ENCODE measurements at regions of chr3 and their contacts with region 1.

Region 1: GRCh38 chr3:45760878-45761711 is 35.2 kb downstream of the SLC6A20 start:
- DNase-seq: peak; percentile 53
- ATAC-seq: peak; percentile 90

Region 2: DNA sequence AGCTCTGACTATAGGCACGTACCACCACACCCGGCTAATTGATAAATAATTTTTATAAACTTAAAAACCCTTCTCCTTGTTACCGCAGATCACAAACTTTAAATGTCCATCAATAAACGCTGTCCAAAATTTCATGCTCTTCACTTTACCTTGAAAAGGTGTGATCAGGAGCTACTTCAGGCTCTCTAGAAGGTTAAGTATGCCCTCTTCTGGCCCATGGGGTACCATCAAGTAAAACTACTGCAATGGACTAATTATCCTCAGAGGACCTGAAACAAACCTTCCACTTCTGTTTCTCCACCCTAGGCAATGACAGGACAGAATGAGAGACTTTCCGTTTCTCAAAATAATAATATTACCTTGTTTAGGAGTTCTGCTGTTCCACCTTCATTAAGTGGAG is 71.6 kb after region 1 on chr3:
- intact Hi-C with region 1: loop called (anchors 5 kb)
- DNase-seq: no peak
- ATAC-seq: peak; percentile 36

Region 3: DNA sequence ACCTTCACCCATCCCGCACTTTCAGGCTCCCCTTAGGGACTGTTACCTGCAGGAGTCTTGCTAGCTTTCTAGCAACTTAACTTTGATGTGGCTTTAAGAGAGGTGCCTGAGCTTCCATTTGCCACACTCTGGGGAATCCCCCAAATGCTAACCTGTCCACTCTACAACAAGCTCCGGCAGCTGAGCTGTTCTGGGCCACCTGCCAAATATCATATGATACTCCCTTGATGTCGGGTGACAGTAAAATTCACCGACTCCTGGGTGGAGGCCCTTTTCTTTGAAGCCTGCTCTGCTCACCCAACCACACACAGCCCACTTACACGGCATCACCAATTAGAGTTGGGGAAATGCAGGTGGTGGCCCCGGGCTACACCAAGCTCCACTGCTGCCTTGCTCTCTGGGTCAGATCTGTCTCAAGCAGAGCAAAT is 304.2 kb after region 1 on chr3:
- intact Hi-C with region 1: loop called (anchors 10 kb)
- DNase-seq: peak; percentile 31
- ATAC-seq: peak; percentile 78